ENCODE measurements at regions of chr15 and their contacts with region 1.

Region 1: GRCh38 chr15:98612490-98613110 is 35.7 kb upstream of the IGF1R start:
- DNase-seq: no peak
- H3K4me3 ChIP-seq: no peak overlapping the region
- H3K27ac ChIP-seq: no peak overlapping the region
- H3K4me1 ChIP-seq: peaks cover 25% of the 10 kb centered on the region
- H3K27me3 ChIP-seq: no peaks in the 10 kb centered on the region
- CTCF ChIP-seq: no peak

Region 2: GRCh38 chr15:98548154-98548971 is 64.2 kb before region 1 on chr15:
- CTCF ChIA-PET with region 1: no interaction called
- dilution Hi-C with region 1: no loop called
- in situ Hi-C with region 1: no loop called
- intact Hi-C with region 1: loop called (anchors 2 kb)
- DNase-seq: peak; percentile 74
- H3K4me3 ChIP-seq: peak overlapping the region; percentile 41 to 67 (median 52)
- H3K27ac ChIP-seq: no peak overlapping the region
- H3K4me1 ChIP-seq: peaks cover 7% of the 10 kb centered on the region
- H3K27me3 ChIP-seq: no peaks in the 10 kb centered on the region
- CTCF ChIP-seq: peak in 1 of 2 donors; percentile 27

Region 3: GRCh38 chr15:98562331-98562937 is 50.2 kb before region 1 on chr15:
- CTCF ChIA-PET with region 1: no interaction called
- dilution Hi-C with region 1: loop called (anchors 5 kb)
- in situ Hi-C with region 1: no loop called
- intact Hi-C with region 1: no loop called
- DNase-seq: peak; percentile 85
- H3K4me3 ChIP-seq: no peak overlapping the region
- H3K27ac ChIP-seq: peak overlapping the region; percentile 43
- H3K4me1 ChIP-seq: peaks cover 34% of the 10 kb centered on the region
- H3K27me3 ChIP-seq: no peaks in the 10 kb centered on the region
- CTCF ChIP-seq: no peak

Region 4: DNA sequence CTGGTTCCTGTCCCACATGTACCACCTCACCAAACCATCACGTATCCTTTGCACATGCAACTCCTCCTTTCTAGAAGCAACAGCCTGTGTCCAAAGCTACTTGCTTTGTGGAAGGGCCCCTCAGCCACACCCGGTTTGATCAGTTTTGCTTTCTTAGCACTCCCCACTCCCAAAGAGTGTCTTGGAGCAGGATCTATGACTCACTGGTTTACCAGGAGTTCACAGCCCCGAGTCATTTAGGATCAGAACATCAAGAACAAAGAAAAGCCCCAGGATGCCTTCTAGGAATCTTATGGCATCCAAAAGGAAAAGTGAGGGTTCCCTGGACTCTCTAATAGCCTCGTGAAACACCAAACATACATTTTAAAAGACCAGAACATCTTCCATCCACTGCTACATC is 14.9 kb before region 1 on chr15:
- CTCF ChIA-PET with region 1: no interaction called
- dilution Hi-C with region 1: no loop called
- in situ Hi-C with region 1: no loop called
- intact Hi-C with region 1: loop called (anchors 1 kb)
- DNase-seq: peak; percentile 16
- H3K4me3 ChIP-seq: no peak overlapping the region
- H3K27ac ChIP-seq: no peak overlapping the region
- H3K4me1 ChIP-seq: peaks cover 18% of the 10 kb centered on the region
- H3K27me3 ChIP-seq: no peaks in the 10 kb centered on the region
- CTCF ChIP-seq: no peak

Region 5: GRCh38 chr15:98658831-98659699 is 46.5 kb after region 1 on chr15:
- CTCF ChIA-PET with region 1: no interaction called
- dilution Hi-C with region 1: no loop called
- in situ Hi-C with region 1: no loop called
- intact Hi-C with region 1: no loop called
- DNase-seq: peak; percentile 60
- H3K4me3 ChIP-seq: no peak overlapping the region
- H3K27ac ChIP-seq: no peak overlapping the region
- H3K4me1 ChIP-seq: peaks cover 49% of the 10 kb centered on the region
- H3K27me3 ChIP-seq: no peaks in the 10 kb centered on the region
- CTCF ChIP-seq: peak; percentile 91